ENCODE measurements at regions of chr6 and their contacts with region 1.

Region 1: DNA sequence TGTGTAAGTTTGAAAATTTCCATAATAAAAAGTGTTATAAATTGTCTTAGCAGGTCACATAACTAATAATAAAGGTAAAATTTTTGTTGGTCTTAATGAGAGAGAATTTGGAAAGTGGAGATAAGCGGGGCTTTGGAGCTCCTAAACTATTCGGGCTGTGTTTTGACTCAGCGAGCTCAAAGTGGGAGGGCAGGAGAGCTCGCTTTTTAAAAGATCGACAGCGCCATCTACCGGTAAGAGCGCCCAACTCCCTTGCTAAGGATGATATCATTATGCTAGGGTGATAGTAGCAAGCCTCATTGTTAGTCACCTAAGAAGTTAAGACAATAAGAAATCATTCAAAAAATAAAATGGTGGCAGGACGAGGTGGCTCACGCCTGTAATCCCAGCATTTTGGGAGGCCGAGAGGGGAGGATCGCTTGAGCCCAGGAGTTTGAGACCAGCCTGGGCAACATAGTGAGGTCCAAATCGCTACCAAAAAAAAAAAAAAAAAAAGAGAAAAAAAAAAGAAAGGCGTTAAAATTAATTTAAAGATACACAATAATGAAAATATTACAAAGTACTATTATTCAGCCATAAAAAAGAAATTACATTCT is 24.8 kb downstream of the C6orf15 start:
- DNase-seq: peak; percentile 95
- H3K4me3 Mint-ChIP-seq: no peak overlapping the region
- H3K27ac Mint-ChIP-seq: no peak overlapping the region
- H3K4me1 Mint-ChIP-seq: peaks cover 10% of the 10 kb centered on the region
- H3K27me3 Mint-ChIP-seq: no peaks in the 10 kb centered on the region

Region 2: DNA sequence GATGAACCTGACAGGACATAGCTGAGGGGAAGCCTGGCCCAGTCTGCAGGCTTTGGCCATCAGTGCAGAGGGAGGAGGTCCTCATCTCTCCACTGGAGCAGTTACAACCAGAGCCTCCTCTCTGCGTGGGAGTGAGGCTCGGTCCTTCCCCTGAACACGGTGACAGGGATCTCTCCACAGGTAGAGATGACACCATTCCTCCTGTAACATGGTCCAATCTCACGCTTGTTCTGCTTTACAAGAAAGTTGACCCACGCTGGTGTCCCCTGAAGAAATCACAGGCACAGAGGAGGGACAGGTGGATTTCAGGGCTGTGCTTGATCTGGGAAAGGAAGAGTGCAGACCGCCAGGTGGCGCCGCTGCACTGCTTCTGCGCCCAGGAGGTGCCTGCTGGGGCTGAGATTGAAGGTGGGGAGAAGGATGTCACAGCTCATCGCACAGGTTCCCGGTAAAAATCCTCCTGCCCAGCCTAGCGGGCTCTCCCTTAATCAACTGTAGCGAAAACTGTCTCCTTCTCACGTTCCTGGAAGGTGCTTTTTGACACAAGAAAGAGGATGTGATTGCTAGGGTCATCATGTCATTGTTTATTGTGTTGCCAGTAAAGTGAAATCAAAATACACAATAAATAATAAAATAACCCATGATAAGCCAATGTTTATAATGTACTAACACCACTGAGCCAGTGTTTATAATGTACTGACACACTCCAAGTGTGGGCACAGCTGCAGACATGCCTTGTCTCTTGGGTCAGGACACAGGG is 1239.5 kb before region 1 on chr6:
- CTCF ChIA-PET with region 1: no interaction called
- intact Hi-C with region 1: no loop called
- DNase-seq: peak; percentile 90
- H3K4me3 Mint-ChIP-seq: no peak overlapping the region
- H3K27ac Mint-ChIP-seq: no peak overlapping the region
- H3K4me1 Mint-ChIP-seq: peaks cover 25% of the 10 kb centered on the region
- H3K27me3 Mint-ChIP-seq: peaks cover 38% of the 10 kb centered on the region

Region 3: GRCh38 chr6:30678964-30679726 is 408.4 kb before region 1 on chr6:
- CTCF ChIA-PET with region 1: interaction called, 6 read pairs
- intact Hi-C with region 1: loop called (anchors 2 kb)
- DNase-seq: peak; percentile 95
- H3K4me3 Mint-ChIP-seq: peak overlapping the region; percentile 96
- H3K27ac Mint-ChIP-seq: peak overlapping the region; percentile 100
- H3K4me1 Mint-ChIP-seq: peaks cover 21% of the 10 kb centered on the region
- H3K27me3 Mint-ChIP-seq: no peaks in the 10 kb centered on the region

Region 4: GRCh38 chr6:30821862-30822782 is 265.5 kb before region 1 on chr6:
- CTCF ChIA-PET with region 1: interaction called, 10 read pairs
- intact Hi-C with region 1: no loop called
- DNase-seq: no peak
- H3K4me3 Mint-ChIP-seq: no peak overlapping the region
- H3K27ac Mint-ChIP-seq: peak overlapping the region; percentile 4
- H3K4me1 Mint-ChIP-seq: peaks cover 79% of the 10 kb centered on the region
- H3K27me3 Mint-ChIP-seq: no peaks in the 10 kb centered on the region

Region 5: DNA sequence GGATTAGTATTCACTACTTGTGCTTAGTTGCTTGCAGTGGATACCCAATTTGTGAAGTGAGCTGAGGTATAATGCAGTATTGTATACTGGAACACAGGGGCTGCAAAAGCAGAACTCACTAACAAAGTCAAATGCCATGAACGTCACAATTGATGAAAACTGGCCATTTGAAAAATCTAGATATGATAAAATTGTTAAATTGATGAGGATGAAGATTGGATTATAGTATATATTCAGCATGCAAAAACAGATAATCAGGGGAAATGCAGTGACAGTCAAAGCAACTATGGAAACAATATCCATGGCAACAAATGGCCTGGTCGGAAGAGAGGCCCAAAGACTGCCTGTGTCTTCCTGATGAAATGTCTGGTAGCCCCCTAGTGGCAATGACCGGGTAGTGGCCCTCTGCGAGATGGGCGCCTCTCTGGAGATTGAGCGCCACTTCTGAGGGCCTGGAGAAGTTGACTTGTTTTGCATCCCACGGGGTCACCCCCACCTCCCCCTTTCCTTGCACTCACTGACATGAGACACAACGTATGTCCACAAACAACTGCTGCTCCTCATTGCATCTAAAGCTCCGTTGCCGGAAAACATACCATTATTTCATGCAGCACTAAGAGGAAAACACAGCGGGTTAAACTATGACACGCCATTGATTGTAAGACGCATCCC is 18.8 kb before region 1 on chr6:
- CTCF ChIA-PET with region 1: interaction called, 6 read pairs
- intact Hi-C with region 1: loop called (anchors 2 kb)
- DNase-seq: peak; percentile 84
- H3K4me3 Mint-ChIP-seq: no peak overlapping the region
- H3K27ac Mint-ChIP-seq: no peak overlapping the region
- H3K4me1 Mint-ChIP-seq: no peaks in the 10 kb centered on the region
- H3K27me3 Mint-ChIP-seq: no peaks in the 10 kb centered on the region

Region 6: DNA sequence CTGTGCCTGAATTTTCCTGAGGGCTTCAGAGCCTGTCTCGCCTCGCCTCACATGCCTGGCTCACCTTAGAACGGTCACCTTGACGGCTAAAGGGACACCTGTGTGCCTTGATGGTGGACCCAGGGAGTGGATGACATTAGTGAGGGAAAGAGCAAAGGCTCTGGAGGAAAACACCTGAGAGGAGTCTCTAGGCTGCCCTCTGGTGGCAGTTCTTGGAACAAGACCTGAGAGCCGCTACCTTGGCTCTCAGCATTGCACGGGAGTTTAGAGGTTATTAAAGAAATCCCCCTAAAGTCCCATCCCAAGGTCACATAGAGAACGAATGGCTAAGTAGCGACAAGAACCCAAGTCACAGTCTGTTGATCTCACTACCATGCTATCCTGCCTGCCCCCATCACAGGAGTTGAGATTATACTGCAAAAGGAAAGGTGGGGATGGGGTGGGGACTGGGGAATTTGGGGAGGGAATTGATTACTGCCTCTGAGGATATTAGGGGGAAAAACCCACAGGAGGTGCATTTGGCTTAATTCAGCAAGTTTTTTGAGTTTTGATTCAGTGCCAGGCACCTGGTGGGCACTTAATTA is 40.6 kb after region 1 on chr6:
- CTCF ChIA-PET with region 1: interaction called, 10 read pairs
- intact Hi-C with region 1: no loop called
- DNase-seq: peak; percentile 90
- H3K4me3 Mint-ChIP-seq: no peak overlapping the region
- H3K27ac Mint-ChIP-seq: no peak overlapping the region
- H3K4me1 Mint-ChIP-seq: peaks cover 5% of the 10 kb centered on the region
- H3K27me3 Mint-ChIP-seq: no peaks in the 10 kb centered on the region

Region 7: GRCh38 chr6:31144296-31144969 is 56.8 kb after region 1 on chr6:
- CTCF ChIA-PET with region 1: no interaction called
- intact Hi-C with region 1: no loop called
- DNase-seq: no peak
- H3K4me3 Mint-ChIP-seq: no peak overlapping the region
- H3K27ac Mint-ChIP-seq: no peak overlapping the region
- H3K4me1 Mint-ChIP-seq: no peaks in the 10 kb centered on the region
- H3K27me3 Mint-ChIP-seq: no peaks in the 10 kb centered on the region

Measured in activated naive CD4-positive, alpha-beta T cell treated with anti-CD3 and anti-CD28 coated beads for 36 hours (primary cell).